ENCODE measurements at regions of chr14 and their contacts with region 1.

Region 1: GRCh38 chr14:72745991-72746980 is 147.6 kb downstream of the DPF3 start:
- DNase-seq: peak; percentile 84
- ATAC-seq: peak; percentile 74
- H3K4me3 ChIP-seq: no peak overlapping the region
- H3K27ac ChIP-seq: peak overlapping the region; percentile 78
- H3K4me1 ChIP-seq: peaks cover 26% of the 10 kb centered on the region
- H3K27me3 ChIP-seq: no peaks in the 10 kb centered on the region
- CTCF ChIP-seq: peak; percentile 40
- POLR2A ChIP-seq: no peak
- RAD21 ChIP-seq: peak; percentile 46

Region 2: GRCh38 chr14:71395151-71395604 is 1351.1 kb before region 1 on chr14:
- CTCF ChIA-PET with region 1: no interaction called
- POLR2A ChIA-PET with region 1: no interaction called
- dilution Hi-C with region 1: no loop called
- in situ Hi-C with region 1: no loop called
- intact Hi-C with region 1: no loop called
- DNase-seq: no peak
- ATAC-seq: no peak
- H3K4me3 ChIP-seq: no peak overlapping the region
- H3K27ac ChIP-seq: no peak overlapping the region
- H3K4me1 ChIP-seq: peaks cover 2% of the 10 kb centered on the region; the same call in 1 of the 2 replicates
- H3K27me3 ChIP-seq: no peaks in the 10 kb centered on the region
- CTCF ChIP-seq: no peak
- POLR2A ChIP-seq: no peak
- RAD21 ChIP-seq: no peak

Region 3: DNA sequence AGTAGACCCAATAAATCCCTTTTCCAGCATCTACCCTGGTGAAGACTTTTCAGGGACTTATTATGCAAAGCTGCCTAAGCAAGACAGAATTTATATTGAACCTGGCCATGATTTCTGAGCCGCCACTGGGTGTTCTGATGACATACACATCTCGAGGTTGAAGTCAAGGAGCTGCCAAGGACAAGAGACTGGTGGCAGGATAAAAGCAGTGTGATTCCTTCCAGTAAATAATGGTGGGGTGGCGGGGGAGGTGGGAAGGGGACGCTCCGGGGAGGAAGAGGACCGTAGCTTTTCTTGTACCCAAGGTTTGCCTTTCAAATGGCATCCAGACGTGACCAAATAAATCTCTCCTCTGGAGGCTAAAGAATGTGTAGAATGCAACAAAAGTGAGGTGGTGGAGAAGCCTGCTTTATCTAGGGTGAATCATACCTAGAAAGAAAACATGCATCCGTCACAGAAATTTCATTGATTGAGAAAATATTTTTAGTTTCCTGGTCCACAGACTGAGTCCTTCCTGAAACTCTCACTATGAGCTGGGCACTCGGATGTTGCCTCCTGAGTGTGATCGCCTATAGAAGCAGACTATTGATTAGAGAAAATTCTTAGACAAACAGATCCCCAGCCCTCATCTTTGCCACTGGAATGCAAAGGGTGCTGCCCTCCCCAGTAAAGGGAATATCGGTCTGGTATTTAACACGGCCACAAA is 35.3 kb after region 1 on chr14:
- CTCF ChIA-PET with region 1: no interaction called
- POLR2A ChIA-PET with region 1: no interaction called
- dilution Hi-C with region 1: no loop called
- in situ Hi-C with region 1: no loop called
- intact Hi-C with region 1: loop called (anchors 2 kb)
- DNase-seq: peak; percentile 71
- ATAC-seq: peak; percentile 66
- H3K4me3 ChIP-seq: no peak overlapping the region
- H3K27ac ChIP-seq: peak overlapping the region; percentile 68
- H3K4me1 ChIP-seq: peaks cover 15% of the 10 kb centered on the region
- H3K27me3 ChIP-seq: no peaks in the 10 kb centered on the region
- CTCF ChIP-seq: no peak
- POLR2A ChIP-seq: no peak
- RAD21 ChIP-seq: no peak